ENCODE measurements at regions of chr19 and their contacts with region 1.

Region 1: DNA sequence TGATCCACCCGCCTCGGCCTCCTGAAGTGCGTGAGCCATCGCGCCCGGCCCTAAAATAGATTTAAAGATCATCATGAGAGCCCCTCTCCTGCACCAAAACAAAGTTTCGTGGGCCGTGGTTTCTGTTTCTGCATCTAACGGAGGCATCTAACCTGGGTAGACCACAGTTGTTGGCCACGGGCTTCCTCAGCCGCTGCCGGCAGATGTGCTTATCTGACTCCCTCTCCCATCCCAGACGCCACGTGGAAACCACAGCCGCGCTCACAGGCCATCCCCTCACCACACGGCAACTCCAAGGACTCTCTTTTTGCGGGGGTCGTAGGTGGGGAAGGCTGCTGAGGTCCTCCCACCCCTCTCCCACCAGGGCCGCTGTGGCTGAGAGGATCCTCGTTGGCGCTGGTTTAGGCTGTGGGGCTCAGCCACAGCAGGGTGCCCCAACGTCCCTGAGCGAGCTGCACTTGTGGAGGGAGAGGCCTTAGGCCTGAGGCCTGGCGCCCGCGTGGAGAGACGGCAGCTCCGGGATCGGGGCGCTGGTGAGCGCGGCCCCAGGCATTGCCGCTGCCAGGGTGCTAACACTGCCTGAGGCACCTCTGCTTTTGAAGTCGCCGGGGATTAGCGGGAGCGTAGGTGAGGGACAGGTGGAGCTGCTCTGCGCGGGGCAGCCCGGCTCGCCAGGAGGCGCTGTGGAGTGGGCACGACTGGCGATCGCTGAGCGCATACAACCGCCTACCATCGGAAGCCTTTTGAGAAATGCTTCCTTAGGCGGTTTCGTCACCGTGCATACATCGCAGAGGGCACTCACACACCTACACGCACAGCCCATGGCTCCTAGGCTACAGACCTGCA is 8.9 kb downstream of the ZSCAN1 start:
- DNase-seq: no peak

Region 2: GRCh38 chr19:58079792-58080191 is 37.1 kb after region 1 on chr19:
- in situ Hi-C with region 1: loop called (anchors 5 kb)
- DNase-seq: no peak

Measured in G401 (cell line).